ENCODE measurements at regions of chr11 and their contacts with region 1.

Region 1: GRCh38 chr11:124673333-124674167 is at the starts of genes SIAE and SPA17:
- DNase-seq: peak; percentile 65 to 94 (median 84)
- ATAC-seq: peak; percentile 77
- H3K4me3 ChIP-seq: peak within 1 kb of the TSS; percentile 69 to 82
- H3K4me3 Mint-ChIP-seq: peak within 1 kb of the TSS; percentile 89
- H3K27ac ChIP-seq: peak within 1 kb of the TSS; percentile 77 to 80
- H3K27ac Mint-ChIP-seq: peak within 1 kb of the TSS; percentile 96
- H3K4me1 ChIP-seq: peaks cover 43% of the 10 kb centered on the region
- H3K4me1 Mint-ChIP-seq: peaks cover 31% of the 10 kb centered on the region
- H3K27me3 ChIP-seq: no peaks in the 10 kb centered on the region
- H3K27me3 Mint-ChIP-seq: no peaks in the 10 kb centered on the region
- CTCF ChIP-seq: no peak
- total RNA-seq, gene SIAE: 2.4 to 3.2 TPM
- total RNA-seq, gene SPA17: 0.22 to 0.68 TPM

Region 2: GRCh38 chr11:124739479-124740276 is 66.1 kb after region 1 on chr11 and contains the start of gene NRGN:
- CTCF ChIA-PET with region 1: interaction called, 55 read pairs
- POLR2A ChIA-PET with region 1: interaction called, 5 read pairs
- intact Hi-C with region 1: loop called in 1 of 2 experiments (anchors 2 kb)
- DNase-seq: peak; percentile 53 to 89 (median 84)
- ATAC-seq: peak; percentile 95
- H3K4me3 ChIP-seq: peak within 1 kb of the TSS; percentile 65 to 73
- H3K4me3 Mint-ChIP-seq: peak within 1 kb of the TSS; percentile 83
- H3K27ac ChIP-seq: no peak within 1 kb of the TSS
- H3K27ac Mint-ChIP-seq: no peak within 1 kb of the TSS
- H3K4me1 ChIP-seq: peaks cover 16% of the 10 kb centered on the region
- H3K4me1 Mint-ChIP-seq: peaks cover 20% of the 10 kb centered on the region
- H3K27me3 ChIP-seq: peaks cover 0 to 11% of the 10 kb centered on the region in 2 experiments
- H3K27me3 Mint-ChIP-seq: peaks cover 5% of the 10 kb centered on the region
- CTCF ChIP-seq: no peak
- total RNA-seq, gene NRGN: 0.31 to 0.41 TPM

Region 3: GRCh38 chr11:124778281-124778680 is 104.7 kb after region 1 on chr11:
- CTCF ChIA-PET with region 1: interaction called, 11 read pairs
- POLR2A ChIA-PET with region 1: no interaction called
- intact Hi-C with region 1: no loop called
- DNase-seq: no peak
- ATAC-seq: no peak
- H3K4me3 ChIP-seq: no peak overlapping the region
- H3K4me3 Mint-ChIP-seq: no peak overlapping the region
- H3K27ac ChIP-seq: no peak overlapping the region
- H3K27ac Mint-ChIP-seq: no peak overlapping the region
- H3K4me1 ChIP-seq: peaks cover 19% of the 10 kb centered on the region
- H3K4me1 Mint-ChIP-seq: peaks cover 22% of the 10 kb centered on the region
- H3K27me3 ChIP-seq: no peaks in the 10 kb centered on the region
- H3K27me3 Mint-ChIP-seq: no peaks in the 10 kb centered on the region
- CTCF ChIP-seq: no peak

Region 4: GRCh38 chr11:124837491-124837856 is 163.9 kb after region 1 on chr11:
- CTCF ChIA-PET with region 1: interaction called, 99 read pairs
- POLR2A ChIA-PET with region 1: interaction called, 4 read pairs
- intact Hi-C with region 1: loop called (anchors 1 kb)
- DNase-seq: peak in 2 of 9 experiments; percentile 19 to 45
- ATAC-seq: peak; percentile 45
- H3K4me3 ChIP-seq: no peak overlapping the region
- H3K4me3 Mint-ChIP-seq: no peak overlapping the region
- H3K27ac ChIP-seq: no peak overlapping the region
- H3K27ac Mint-ChIP-seq: no peak overlapping the region
- H3K4me1 ChIP-seq: peaks cover 7% of the 10 kb centered on the region
- H3K4me1 Mint-ChIP-seq: peaks cover 17% of the 10 kb centered on the region
- H3K27me3 ChIP-seq: peaks cover 11 to 14% of the 10 kb centered on the region in 2 experiments
- H3K27me3 Mint-ChIP-seq: peaks cover 56% of the 10 kb centered on the region
- CTCF ChIP-seq: no peak

Region 5: DNA sequence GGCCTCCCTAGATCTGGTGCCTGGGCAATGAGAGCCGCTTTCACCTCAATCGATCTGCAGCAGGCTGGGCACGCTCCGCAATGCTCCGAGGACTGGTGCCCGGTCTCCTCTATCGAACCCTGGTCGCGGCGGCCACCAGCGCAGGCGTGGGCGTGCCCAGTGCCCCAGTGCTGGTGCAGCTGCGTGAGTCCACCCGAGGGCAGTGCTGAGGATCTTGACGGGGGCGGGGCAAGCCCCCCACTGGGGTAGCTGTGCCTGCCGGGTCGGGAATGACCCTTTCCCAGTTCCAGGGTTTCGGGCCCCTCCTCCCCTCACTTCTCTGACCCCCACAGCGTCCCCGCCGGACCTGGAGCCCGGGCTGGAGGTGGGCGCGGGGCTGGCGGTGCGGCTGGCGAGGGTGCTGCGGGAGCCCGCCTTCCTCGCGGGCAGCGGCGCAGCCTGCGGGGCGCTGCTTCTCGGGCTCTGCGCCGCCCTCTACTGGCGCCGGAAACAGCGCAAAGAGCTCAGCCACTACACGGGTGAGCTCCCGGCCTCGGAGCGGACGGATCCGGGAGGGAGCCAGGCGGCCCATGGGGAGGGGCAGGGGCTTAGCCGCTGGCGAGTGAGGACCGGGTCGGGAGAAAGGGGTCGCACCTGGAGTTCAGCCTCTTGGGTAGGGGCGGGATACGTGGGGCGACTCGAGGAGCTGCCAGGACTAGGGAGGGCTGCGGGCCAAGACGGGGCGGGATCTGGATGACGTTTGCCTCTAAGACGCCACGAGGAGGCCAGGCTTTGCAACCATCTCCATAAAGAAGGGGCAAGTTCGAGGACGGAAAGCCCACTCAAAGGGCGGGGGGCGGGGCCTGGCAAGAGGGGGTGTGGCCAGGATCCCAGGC is 202.6 kb after region 1 on chr11:
- CTCF ChIA-PET with region 1: interaction called, 6 read pairs
- POLR2A ChIA-PET with region 1: no interaction called
- intact Hi-C with region 1: loop called in 1 of 2 experiments (anchors 1 kb)
- DNase-seq: peak; percentile 60 to 90 (median 76)
- ATAC-seq: peak; percentile 91
- H3K4me3 ChIP-seq: peak overlapping the region; percentile 75 to 88
- H3K4me3 Mint-ChIP-seq: peak overlapping the region; percentile 93
- H3K27ac ChIP-seq: peak overlapping the region; percentile 77 to 96
- H3K27ac Mint-ChIP-seq: peak overlapping the region; percentile 92
- H3K4me1 ChIP-seq: peaks cover 16% of the 10 kb centered on the region
- H3K4me1 Mint-ChIP-seq: peaks cover 24% of the 10 kb centered on the region
- H3K27me3 ChIP-seq: no peaks in the 10 kb centered on the region
- H3K27me3 Mint-ChIP-seq: peaks cover 27% of the 10 kb centered on the region
- CTCF ChIP-seq: peak; percentile 65